GM18951 (cell line): ENCODE measurements at regions of chr6 and their contacts with region 1.

Region 1: GRCh38 chr6:146857180-146857979 is 258.6 kb downstream of the ADGB start:
- POLR2A ChIP-seq: no peak

Region 2: GRCh38 chr6:146090474-146090873 is 766.9 kb before region 1 on chr6:
- in situ Hi-C with region 1: no loop called
- POLR2A ChIP-seq: no peak

Region 3: DNA sequence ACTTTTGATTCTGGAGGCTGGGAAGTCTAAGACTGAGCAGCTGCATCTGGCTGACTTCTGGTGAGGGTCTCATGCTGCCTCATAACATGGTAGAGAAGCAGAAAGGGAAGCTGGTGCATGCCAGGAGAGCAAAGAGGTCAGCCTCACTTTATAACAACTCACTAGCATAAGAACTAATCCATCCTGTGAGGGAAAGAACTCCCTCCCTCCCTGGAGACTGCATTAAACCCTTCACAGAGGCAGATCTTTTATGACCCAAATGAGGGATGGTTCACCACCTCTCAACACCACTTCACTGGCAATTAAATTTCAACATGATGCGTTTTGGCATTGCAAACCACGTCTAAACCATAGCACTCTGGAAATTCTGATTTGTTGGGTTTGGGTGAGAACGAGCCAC is 380.8 kb after region 1 on chr6:
- in situ Hi-C with region 1: no loop called
- POLR2A ChIP-seq: no peak

Region 4: GRCh38 chr6:147285087-147285855 is 427.9 kb after region 1 on chr6:
- in situ Hi-C with region 1: loop called (anchors 25 kb)
- POLR2A ChIP-seq: no peak

Region 5: DNA sequence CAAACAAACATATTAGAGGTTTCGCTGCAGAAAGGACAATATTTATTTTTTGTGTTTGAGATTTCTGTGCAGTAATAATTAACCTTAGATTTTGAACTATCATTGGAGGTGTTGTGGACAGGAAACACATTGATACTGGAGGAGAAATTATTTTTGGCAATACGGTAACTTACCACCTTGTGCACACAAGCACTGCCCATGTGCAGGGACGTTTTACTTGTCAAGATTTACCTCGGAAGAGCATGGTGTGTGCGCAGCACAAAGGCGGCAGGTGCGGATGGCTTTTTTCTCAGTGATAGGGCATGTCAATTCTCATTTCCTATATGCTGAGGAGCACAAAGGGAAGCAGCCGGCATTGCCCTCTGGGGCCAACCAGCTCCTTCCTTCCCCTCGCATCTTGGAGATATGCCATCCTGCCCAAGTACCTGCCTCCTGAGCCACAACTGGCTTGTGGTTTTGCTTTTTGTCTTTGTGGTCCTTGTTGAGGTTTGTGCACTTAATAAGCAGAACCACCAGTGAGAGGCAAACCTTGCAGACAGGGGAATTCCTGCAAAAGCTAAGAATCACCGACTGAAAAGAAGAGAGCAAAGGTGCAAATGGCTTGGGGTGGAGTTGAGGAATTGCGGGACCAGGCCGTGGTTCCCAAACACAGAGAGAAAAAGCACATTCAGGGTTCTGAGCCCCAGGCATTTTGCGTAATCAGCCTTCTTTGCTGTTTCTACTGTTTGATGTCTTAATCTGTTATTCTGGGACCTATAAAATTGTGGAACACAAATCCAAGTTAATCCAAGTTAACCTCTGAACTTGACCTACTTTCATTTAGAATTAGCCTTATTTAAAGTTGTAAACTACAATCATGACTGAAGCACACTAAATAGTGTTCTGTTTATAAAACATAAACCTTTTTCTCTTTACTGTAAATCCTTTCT is 673.0 kb after region 1 on chr6:
- in situ Hi-C with region 1: no loop called
- POLR2A ChIP-seq: no peak

Region 6: DNA sequence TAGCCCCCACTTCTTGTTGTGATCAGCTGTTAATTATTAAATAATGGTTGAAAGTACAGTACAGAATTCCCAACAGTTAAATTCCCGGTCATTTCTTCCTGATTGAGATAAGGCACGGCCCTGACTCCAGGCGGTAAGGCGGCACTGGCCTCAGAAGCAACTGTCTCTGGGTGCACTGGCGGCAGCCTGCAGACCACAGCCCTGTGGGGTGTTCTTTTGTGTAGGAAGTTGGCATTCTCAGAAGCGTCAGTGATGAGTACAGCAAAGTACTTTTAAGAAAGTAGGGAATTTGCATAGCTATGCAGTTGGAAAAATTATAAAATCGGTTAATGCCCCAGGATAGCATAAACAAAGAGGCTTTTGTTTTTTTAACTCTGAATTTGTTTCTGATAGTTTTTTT is 701.6 kb after region 1 on chr6:
- in situ Hi-C with region 1: no loop called
- POLR2A ChIP-seq: no peak